ENCODE measurements at regions of chr5 and their contacts with region 1.

Region 1: DNA sequence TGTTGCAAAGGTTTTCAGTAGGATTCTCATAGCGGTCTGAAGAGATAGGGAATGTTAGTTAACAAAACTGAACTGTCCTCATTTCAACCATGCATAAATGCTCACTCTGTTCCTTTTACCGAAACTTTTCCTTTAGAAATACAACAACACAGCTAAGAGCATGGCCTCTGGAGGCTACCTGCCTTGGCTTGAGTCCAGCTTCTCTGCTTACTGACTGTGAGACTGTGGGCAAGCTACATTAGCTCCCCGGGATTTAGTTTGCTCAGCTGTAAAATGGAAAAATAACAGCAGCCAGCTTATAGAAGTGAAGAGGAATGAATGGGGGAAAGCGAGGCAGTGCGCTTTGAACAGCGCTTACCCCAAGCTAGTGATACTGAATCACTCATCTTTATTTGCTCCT is 507.9 kb upstream of the DAP start:
- DNase-seq: no peak
- ATAC-seq: no peak

Region 2: DNA sequence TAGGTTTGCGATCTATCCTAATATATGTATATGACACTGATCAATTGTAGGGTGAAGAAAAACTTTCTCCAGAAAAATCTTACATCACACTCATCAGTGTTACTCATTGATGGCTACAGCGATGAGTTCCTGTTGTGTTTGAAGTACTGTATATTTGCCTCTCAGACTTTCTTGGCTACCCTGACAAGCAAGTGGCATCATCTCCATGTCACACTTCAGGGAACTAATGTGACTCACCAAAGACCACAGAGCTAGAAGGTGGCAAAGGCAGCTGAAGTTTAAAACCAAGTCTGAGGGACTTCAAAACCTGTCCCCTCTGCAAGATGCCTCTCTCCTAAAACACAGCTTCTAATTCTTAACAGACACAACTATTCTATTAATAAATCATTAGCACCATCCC is 184.0 kb after region 1 on chr5:
- intact Hi-C with region 1: no loop called
- DNase-seq: no peak
- ATAC-seq: no peak

Region 3: GRCh38 chr5:11496137-11496719 is 227.3 kb after region 1 on chr5:
- intact Hi-C with region 1: loop called (anchors 5 kb)
- DNase-seq: no peak
- ATAC-seq: peak; percentile 71

Region 4: DNA sequence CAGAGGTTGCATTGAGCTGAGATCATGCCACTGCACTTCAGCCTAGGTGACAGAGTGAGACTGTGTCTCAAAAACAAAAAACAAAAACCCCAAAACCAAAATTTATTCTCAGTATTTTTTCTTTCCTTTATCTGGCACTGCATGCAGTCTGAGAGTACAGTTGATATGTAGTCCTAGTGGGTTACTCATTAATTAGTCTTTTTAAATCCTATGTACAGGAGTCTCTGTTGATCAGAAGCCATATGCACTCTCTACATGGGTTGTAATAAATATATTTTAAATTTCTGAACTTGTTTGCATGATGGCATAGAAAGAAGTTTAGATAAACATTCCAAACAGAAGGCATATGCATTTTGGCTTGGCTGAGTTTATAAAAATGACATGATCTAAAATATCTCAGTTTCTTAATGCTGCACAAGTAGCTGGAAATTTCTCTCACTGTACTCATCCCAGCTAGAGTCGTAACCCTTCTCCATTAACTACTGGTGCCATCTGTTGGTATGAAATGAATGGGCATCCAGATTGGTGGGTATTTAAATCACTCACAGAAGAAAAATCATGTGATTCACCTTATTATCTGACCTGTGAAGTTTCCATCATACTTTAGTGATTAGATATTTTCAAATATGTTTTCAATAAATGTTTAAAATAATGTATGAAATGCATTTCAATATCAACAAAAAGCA is 350.6 kb after region 1 on chr5:
- intact Hi-C with region 1: loop called (anchors 2 kb)
- DNase-seq: no peak
- ATAC-seq: peak; percentile 64

Measured in Right ventricle myocardium inferior (tissue), 1 donor.